Natural killer cell (primary cell): ENCODE measurements at regions of chr12 and their contacts with region 1.

Region 1: GRCh38 chr12:55926738-55927587 is 731 bp downstream of the PYM1 start:
- DNase-seq: peak; percentile 83 to 96
- ATAC-seq: peak; percentile 60 to 80 (median 70)
- H3K4me3 ChIP-seq: peak overlapping the region; percentile 95
- H3K4me3 Mint-ChIP-seq: peak overlapping the region; percentile 97
- H3K27ac ChIP-seq: peak overlapping the region; percentile 86
- H3K27ac Mint-ChIP-seq: peak overlapping the region; percentile 97 to 98
- H3K4me1 ChIP-seq: peaks cover 48% of the 10 kb centered on the region
- H3K4me1 Mint-ChIP-seq: peaks cover 55 to 69% of the 10 kb centered on the region in 2 donors
- H3K27me3 ChIP-seq: no peaks in the 10 kb centered on the region
- H3K27me3 Mint-ChIP-seq: no peaks in the 10 kb centered on the region
- CTCF ChIP-seq: peak; percentile 85

Region 2: GRCh38 chr12:55728939-55729823 is 197.8 kb before region 1 on chr12 and contains the start of gene CD63:
- intact Hi-C with region 1: loop called (anchors 5 kb)
- DNase-seq: peak; percentile 71
- ATAC-seq: peak; percentile 66 to 78 (median 67)
- H3K4me3 ChIP-seq: peak within 1 kb of the TSS; percentile 83
- H3K4me3 Mint-ChIP-seq: peak within 1 kb of the TSS; percentile 88
- H3K27ac ChIP-seq: peak within 1 kb of the TSS; percentile 93
- H3K27ac Mint-ChIP-seq: peak within 1 kb of the TSS; percentile 82 to 95
- H3K4me1 ChIP-seq: peaks cover 65% of the 10 kb centered on the region
- H3K4me1 Mint-ChIP-seq: peaks cover 43 to 66% of the 10 kb centered on the region in 2 donors
- H3K27me3 ChIP-seq: no peaks in the 10 kb centered on the region
- H3K27me3 Mint-ChIP-seq: no peaks in the 10 kb centered on the region
- CTCF ChIP-seq: no peak
- total RNA-seq, gene CD63: 296 to 441 (median 319) TPM

Region 3: GRCh38 chr12:55817346-55818139 is 109.4 kb before region 1 on chr12 and contains the starts of genes ORMDL2 and SARNP:
- intact Hi-C with region 1: loop called (anchors 2 kb)
- DNase-seq: peak; percentile 88 to 99
- ATAC-seq: peak; percentile 91 to 97 (median 92)
- H3K4me3 ChIP-seq: peak within 1 kb of the TSS; percentile 85
- H3K4me3 Mint-ChIP-seq: no peak within 1 kb of the TSS
- H3K27ac ChIP-seq: peak within 1 kb of the TSS; percentile 78
- H3K27ac Mint-ChIP-seq: no peak within 1 kb of the TSS
- H3K4me1 ChIP-seq: peaks cover 22% of the 10 kb centered on the region
- H3K4me1 Mint-ChIP-seq: peaks cover 22 to 29% of the 10 kb centered on the region in 2 donors
- H3K27me3 ChIP-seq: no peaks in the 10 kb centered on the region
- H3K27me3 Mint-ChIP-seq: no peaks in the 10 kb centered on the region
- CTCF ChIP-seq: no peak
- total RNA-seq, gene ORMDL2: 21.3 to 36.3 (median 23.1) TPM
- total RNA-seq, gene SARNP: 50.5 to 57.0 (median 51.2) TPM

Region 4: GRCh38 chr12:55829967-55830600 is 96.9 kb before region 1 on chr12:
- intact Hi-C with region 1: loop called (anchors 1 kb)
- DNase-seq: peak; percentile 28 to 59
- ATAC-seq: peak in 1 of 3 donors; percentile 11
- H3K4me3 ChIP-seq: peak overlapping the region; percentile 68
- H3K4me3 Mint-ChIP-seq: peak overlapping the region; percentile 99
- H3K27ac ChIP-seq: peak overlapping the region; percentile 61
- H3K27ac Mint-ChIP-seq: peak overlapping the region; percentile 91 to 95
- H3K4me1 ChIP-seq: peaks cover 49% of the 10 kb centered on the region
- H3K4me1 Mint-ChIP-seq: peaks cover 44 to 56% of the 10 kb centered on the region in 2 donors
- H3K27me3 ChIP-seq: no peaks in the 10 kb centered on the region
- H3K27me3 Mint-ChIP-seq: no peaks in the 10 kb centered on the region
- CTCF ChIP-seq: no peak

Region 5: DNA sequence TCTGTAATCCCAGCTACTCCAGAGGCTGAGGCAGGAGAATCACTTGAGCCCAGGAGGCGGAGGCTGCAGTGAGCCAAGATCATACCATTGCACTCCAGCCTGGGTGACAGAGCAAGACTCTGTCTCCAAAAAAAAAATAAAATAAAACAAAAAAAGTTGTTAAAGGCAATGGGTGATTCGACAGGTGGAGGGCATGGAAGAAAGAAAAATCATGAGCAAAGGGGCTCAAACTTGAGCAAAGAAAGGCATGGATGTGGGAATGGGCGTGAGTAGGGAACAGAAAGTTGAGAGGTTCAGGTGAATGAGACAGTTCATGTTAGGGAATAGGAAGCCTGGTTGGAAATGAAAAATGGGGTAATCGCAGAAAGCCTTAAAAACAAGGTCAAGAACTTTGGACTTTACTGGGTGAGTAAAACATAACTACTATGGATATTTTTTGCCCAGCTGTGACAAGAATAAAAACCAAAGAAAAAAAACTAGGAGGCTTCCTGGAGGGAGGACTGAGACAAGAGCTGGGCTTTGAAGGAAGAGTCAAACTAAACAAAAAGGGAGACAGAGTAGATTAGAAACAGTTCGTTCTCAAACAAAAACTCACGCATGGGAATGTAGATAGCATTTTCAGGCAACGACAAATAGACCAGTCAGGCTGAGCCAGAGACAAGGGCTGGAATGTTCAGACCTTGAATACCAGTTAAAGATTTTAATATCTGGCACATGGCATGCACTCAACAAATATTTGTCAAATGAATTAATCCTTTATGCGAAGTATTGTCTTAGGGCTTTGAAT is 18.0 kb before region 1 on chr12:
- intact Hi-C with region 1: no loop called
- DNase-seq: no peak
- ATAC-seq: no peak
- H3K4me3 ChIP-seq: no peak overlapping the region
- H3K4me3 Mint-ChIP-seq: no peak overlapping the region
- H3K27ac ChIP-seq: no peak overlapping the region
- H3K27ac Mint-ChIP-seq: peak overlapping the region in 1 of 2 donors; percentile 27
- H3K4me1 ChIP-seq: no peaks in the 10 kb centered on the region
- H3K4me1 Mint-ChIP-seq: peaks cover 13 to 19% of the 10 kb centered on the region in 2 donors
- H3K27me3 ChIP-seq: no peaks in the 10 kb centered on the region
- H3K27me3 Mint-ChIP-seq: no peaks in the 10 kb centered on the region
- CTCF ChIP-seq: no peak

Region 6: DNA sequence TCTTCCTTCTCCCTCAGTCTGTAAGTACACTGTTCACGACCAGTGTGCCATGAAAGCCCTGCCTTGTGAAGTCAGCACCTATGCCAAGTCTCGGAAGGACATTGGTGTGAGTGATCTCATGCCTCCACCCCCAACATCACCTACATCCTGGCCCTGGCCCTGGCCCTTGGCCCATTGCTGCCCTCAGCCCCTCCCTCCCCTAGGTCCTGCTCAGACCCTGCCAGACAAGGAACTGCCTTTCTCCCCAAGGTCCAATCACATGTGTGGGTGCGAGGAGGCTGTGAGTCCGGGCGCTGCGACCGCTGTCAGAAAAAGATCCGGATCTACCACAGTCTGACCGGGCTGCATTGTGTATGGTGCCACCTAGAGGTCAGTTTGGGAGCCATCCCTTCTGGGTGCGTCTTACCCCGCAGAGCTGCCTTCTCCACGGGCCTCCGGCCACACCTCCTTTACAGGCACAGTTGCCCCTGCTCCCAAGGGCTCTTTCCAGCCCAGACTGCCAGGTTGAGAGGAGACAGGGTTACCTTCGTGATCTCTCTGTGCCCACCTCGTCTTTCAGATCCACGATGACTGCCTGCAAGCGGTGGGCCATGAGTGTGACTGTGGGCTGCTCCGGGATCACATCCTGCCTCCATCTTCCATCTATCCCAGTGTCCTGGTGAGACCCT is 13.2 kb after region 1 on chr12:
- intact Hi-C with region 1: loop called (anchors 1 kb)
- DNase-seq: peak; percentile 76 to 93
- ATAC-seq: peak; percentile 97 to 99 (median 99)
- H3K4me3 ChIP-seq: no peak overlapping the region
- H3K4me3 Mint-ChIP-seq: no peak overlapping the region
- H3K27ac ChIP-seq: peak overlapping the region; percentile 16
- H3K27ac Mint-ChIP-seq: peak overlapping the region in 1 of 2 donors; percentile 33
- H3K4me1 ChIP-seq: peaks cover 11% of the 10 kb centered on the region
- H3K4me1 Mint-ChIP-seq: peaks cover 10 to 12% of the 10 kb centered on the region in 2 donors
- H3K27me3 ChIP-seq: no peaks in the 10 kb centered on the region
- H3K27me3 Mint-ChIP-seq: no peaks in the 10 kb centered on the region
- CTCF ChIP-seq: peak; percentile 82

Region 7: DNA sequence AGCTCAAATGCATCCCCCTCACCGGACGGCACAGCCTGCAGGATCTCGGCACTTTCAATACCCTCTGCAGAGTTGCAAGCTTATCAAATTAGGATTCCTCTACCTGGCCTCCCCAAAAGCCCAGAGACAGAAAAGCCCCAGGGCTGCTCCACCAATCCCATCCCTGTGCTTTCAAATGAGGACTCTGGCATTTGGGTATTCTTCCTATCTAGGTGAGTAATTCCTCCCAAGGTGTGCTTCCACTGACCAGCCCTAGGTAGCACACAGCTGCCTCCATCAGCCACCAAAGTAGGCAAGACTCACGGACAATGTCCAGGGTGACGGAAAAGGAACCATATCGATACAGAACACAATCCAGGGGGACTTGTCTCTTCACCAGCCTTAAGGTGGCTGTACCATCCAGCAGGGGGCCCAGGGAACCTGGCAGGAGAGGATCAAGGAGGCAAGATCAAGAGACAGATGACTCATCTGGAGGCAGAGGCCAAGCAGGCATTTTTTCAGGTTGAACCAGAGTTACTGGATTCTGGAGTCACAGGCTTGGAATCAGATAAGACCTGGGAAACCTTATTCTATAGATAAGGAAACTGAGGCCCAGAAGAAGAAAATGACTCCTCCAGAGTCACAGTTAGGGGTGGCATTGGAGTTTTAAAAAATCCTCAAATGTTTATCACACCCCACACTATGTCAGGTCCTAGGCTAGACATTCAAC is 29.0 kb after region 1 on chr12:
- intact Hi-C with region 1: no loop called
- DNase-seq: peak in 1 of 2 donors; percentile 61
- ATAC-seq: no peak
- H3K4me3 ChIP-seq: no peak overlapping the region
- H3K4me3 Mint-ChIP-seq: no peak overlapping the region
- H3K27ac ChIP-seq: no peak overlapping the region
- H3K27ac Mint-ChIP-seq: peak overlapping the region in 1 of 2 donors; percentile 58
- H3K4me1 ChIP-seq: no peaks in the 10 kb centered on the region
- H3K4me1 Mint-ChIP-seq: peaks cover 0 to 5% of the 10 kb centered on the region in 2 donors
- H3K27me3 ChIP-seq: no peaks in the 10 kb centered on the region
- H3K27me3 Mint-ChIP-seq: no peaks in the 10 kb centered on the region
- CTCF ChIP-seq: no peak

Region 8: DNA sequence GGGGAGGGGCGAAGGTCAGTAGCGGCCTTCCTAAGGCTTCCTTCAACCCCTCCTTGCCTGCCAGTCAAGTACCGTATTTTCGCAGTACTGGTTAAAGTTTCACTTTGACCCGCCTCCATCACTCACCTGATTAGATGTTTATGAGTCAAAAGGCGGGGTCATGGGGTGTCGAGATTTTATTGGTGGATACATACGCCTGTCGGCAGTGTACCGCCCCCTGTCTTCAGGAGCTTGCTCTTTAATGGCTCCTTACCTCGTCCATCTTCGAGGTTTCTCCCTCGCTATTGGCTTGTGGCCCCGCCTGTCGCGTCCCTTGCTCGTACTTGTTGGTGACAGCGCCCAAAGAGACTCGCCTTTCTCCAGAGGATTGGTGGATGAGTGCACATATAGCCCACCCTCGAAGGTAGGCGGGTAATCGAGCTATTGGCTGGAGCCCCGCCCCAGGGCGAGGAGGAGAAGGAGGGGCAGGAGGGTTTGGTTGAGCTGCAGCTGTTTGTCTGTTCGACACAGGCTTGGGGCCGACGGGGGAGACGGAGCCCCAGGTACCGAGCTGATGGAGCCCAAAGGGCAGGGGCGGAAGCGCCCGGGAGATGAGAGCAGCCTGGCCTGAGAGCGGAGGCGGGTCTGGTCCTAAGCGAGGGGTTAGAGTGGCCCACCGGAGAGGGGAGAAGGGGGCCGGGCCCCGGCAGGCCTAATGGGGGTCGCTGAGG is 46.8 kb after region 1 on chr12 and contains the start of gene RAB5B:
- intact Hi-C with region 1: loop called (anchors 2 kb)
- DNase-seq: peak; percentile 93 to 99
- ATAC-seq: peak; percentile 85 to 95 (median 85)
- H3K4me3 ChIP-seq: peak within 1 kb of the TSS; percentile 83
- H3K4me3 Mint-ChIP-seq: no peak within 1 kb of the TSS
- H3K27ac ChIP-seq: peak within 1 kb of the TSS; percentile 84
- H3K27ac Mint-ChIP-seq: no peak within 1 kb of the TSS
- H3K4me1 ChIP-seq: peaks cover 14% of the 10 kb centered on the region
- H3K4me1 Mint-ChIP-seq: peaks cover 18 to 24% of the 10 kb centered on the region in 2 donors
- H3K27me3 ChIP-seq: no peaks in the 10 kb centered on the region
- H3K27me3 Mint-ChIP-seq: no peaks in the 10 kb centered on the region
- CTCF ChIP-seq: no peak
- total RNA-seq, gene RAB5B: 69.4 to 80.0 (median 78.2) TPM